ENCODE measurements at regions of chr11 and their contacts with region 1.

Region 1: GRCh38 chr11:12680246-12680939 is 6.2 kb downstream of the TEAD1 start:
- DNase-seq: peak; percentile 79 to 89
- H3K4me3 ChIP-seq: peak overlapping the region in 1 of 2 donors; percentile 19
- H3K27ac ChIP-seq: peak overlapping the region; percentile 13 to 37
- H3K4me1 ChIP-seq: peaks cover 0 to 65% (median 23%) of the 10 kb centered on the region in 4 donors
- H3K27me3 ChIP-seq: no peaks in the 10 kb centered on the region
- CTCF ChIP-seq: no peak

Region 2: GRCh38 chr11:12813371-12814225 is 133.2 kb after region 1 on chr11:
- intact Hi-C with region 1: loop called (anchors 10 kb)
- DNase-seq: no peak
- H3K4me3 ChIP-seq: no peak overlapping the region
- H3K27ac ChIP-seq: peak overlapping the region; percentile 31 to 51
- H3K4me1 ChIP-seq: peaks cover 4 to 47% (median 25%) of the 10 kb centered on the region in 4 donors
- H3K27me3 ChIP-seq: no peaks in the 10 kb centered on the region
- CTCF ChIP-seq: no peak

Measured in tibial artery (tissue), 4 donors.